Lower leg skin (tissue), 4 donors: ENCODE measurements at regions of chr4 and their contacts with region 1.

Region 1: GRCh38 chr4:172232966-172233365 is 419.8 kb downstream of the GALNTL6 start:
- DNase-seq: no peak
- H3K4me3 ChIP-seq: no peak overlapping the region
- CTCF ChIP-seq: no peak
- POLR2A ChIP-seq: no peak

Region 2: DNA sequence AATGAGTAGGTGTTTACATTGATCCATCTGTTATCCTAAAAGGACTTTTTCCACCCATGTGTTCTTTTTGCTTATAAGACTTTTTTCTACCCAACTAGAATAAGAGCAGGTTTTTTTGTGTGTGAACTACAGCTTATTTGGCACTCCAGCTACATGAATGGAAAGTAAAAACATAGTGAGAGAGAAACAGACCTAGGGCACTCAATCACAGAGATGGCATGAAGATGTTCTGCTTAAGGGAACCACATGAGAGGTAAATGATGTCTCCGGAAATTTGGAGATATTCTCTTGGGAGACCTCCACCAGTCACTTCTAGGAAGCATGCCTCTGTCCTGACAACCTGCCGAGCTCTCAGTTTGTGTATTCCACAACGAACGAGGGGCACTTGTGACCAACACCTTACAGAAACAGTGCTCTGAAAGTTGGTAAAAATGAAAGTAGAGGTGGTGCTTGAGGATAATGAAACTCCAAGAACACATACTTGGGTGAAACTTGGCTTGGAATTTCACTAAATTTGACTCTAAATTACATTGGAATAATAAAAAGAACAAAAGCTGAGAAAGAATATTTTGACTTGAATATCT is 1208.2 kb before region 1 on chr4:
- intact Hi-C with region 1: loop called (anchors 5 kb)
- DNase-seq: no peak
- H3K4me3 ChIP-seq: no peak overlapping the region
- CTCF ChIP-seq: no peak
- POLR2A ChIP-seq: no peak

Region 3: DNA sequence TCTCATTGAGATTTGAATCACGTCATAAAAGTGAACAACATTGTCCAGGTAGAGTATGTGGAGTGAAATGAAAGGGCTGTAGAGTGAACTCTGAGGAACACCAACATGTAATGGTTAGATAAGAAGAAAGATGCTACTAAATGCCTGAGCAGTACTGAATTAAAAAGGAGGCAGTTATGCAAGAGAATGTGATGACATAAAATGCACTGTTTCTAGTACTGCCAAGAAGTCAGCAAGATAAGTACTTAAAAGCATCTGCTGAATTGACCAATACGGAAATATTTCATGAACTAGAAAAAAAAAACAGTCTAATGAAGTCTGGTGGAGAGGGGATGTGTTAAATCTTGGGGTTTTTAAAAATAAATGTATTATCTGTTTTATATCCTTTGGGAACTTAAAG is 351.9 kb after region 1 on chr4:
- intact Hi-C with region 1: no loop called
- DNase-seq: no peak
- H3K4me3 ChIP-seq: no peak overlapping the region
- CTCF ChIP-seq: no peak
- POLR2A ChIP-seq: no peak